Activated CD8-positive, alpha-beta memory T cell treated with anti-CD3 and anti-CD28 coated beads, Interleukin-2, amount 10 ng/mL, durations not matched to agents 7 days and 5 days (primary cell): ENCODE measurements at regions of chr10 and their contacts with region 1.

Region 1: DNA sequence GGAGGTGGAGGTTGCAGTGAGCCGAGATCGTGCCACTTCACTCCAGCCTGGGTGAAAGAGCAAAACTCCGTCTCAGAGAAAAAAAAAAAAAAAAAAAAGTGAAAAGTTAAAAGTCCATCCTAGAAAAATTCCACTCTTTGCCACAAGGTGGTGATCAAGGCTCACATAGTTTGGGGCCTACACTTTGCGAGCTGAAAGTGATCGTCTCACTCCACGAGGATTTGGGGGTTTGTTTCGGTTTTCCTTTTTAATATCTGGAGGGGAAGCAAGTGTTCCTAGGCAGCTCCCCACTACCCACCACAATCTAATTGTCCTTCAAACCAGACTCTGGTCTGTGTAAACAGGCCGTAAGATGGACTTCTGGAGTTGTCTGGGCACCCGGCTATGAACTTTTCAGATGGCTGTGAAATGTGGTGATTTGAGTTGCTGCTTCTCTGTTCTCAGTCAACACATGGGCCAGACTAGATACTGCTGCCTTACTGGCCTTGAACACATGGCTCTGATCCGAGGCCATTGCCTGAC is 27.1 kb downstream of the PRLHR start:
- DNase-seq: peak; percentile 61
- ATAC-seq: peak; percentile 60
- H3K4me3 Mint-ChIP-seq: no peak overlapping the region
- H3K27ac Mint-ChIP-seq: no peak overlapping the region
- H3K4me1 Mint-ChIP-seq: peaks cover 2% of the 10 kb centered on the region
- H3K27me3 Mint-ChIP-seq: peaks cover 7% of the 10 kb centered on the region

Region 2: DNA sequence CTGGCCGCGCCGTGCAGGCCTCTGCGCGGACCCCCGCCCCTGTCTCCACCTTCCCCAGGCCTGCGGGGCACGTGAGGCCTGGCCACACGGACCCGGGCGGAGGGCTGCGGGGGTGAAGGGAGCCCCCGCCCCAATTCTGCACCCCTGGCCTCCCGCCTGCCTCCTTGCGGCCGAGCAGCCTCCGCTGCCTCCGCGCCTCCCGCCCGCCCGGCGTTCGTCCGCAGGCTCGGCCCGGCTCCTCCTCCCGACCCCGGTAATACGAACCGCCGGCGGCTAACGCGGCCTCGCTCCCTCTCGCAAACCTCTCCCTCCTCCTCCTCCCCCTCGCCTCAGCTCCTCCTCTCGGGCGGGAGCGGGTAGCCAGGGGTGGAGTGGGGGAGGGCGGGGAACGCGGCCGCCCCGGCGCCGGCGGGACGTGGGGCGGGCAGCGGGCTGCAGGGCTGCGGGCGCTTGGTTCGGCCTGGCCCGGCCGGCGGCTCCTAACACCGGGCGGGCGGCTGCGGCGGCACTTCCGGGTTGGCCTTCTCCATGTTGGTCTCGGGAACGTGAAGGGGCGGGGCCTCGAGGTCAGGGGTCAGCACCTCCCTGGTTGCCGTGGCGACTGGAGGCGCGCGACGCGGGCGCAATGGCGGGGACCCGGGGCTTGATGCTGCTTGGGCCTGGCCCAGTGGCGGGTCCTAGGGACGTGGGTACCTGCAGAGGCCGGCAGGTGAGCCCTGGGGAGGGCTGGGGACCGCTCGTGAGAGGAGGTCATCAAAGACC is 521.8 kb before region 1 on chr10 and contains the start of gene RAB11FIP2:
- CTCF ChIA-PET with region 1: no interaction called
- DNase-seq: peak; percentile 96
- ATAC-seq: peak; percentile 92
- H3K4me3 Mint-ChIP-seq: peak within 1 kb of the TSS; percentile 83
- H3K27ac Mint-ChIP-seq: peak within 1 kb of the TSS; percentile 75
- H3K4me1 Mint-ChIP-seq: peaks cover 27% of the 10 kb centered on the region
- H3K27me3 Mint-ChIP-seq: no peaks in the 10 kb centered on the region
- total RNA-seq, gene RAB11FIP2: 12.8 to 16.9 TPM

Region 3: GRCh38 chr10:118383699-118384098 is 184.7 kb before region 1 on chr10:
- CTCF ChIA-PET with region 1: no interaction called
- DNase-seq: no peak
- ATAC-seq: no peak
- H3K4me3 Mint-ChIP-seq: no peak overlapping the region
- H3K27ac Mint-ChIP-seq: no peak overlapping the region
- H3K4me1 Mint-ChIP-seq: no peaks in the 10 kb centered on the region
- H3K27me3 Mint-ChIP-seq: peaks cover 27% of the 10 kb centered on the region

Region 4: DNA sequence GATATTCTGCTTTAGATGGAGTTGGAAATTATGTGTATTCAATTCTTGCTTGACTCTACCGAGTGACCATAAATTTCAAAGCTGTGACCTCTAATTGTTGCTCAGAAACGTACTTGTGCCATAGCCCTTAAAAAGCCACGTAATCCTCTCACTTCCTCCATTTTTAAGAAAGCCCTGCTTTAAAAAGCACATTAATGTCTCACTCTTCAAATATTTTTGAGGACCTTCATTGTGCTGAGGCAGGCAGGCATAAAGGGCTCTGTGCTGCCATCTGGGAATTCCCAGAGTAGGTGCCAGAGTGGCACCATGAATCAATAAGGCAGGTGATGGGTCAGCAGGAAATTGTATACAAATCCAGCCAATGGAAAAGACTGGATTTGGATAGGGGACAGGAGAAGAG is 128.6 kb before region 1 on chr10:
- CTCF ChIA-PET with region 1: no interaction called
- DNase-seq: no peak
- ATAC-seq: no peak
- H3K4me3 Mint-ChIP-seq: no peak overlapping the region
- H3K27ac Mint-ChIP-seq: no peak overlapping the region
- H3K4me1 Mint-ChIP-seq: no peaks in the 10 kb centered on the region
- H3K27me3 Mint-ChIP-seq: peaks cover 41% of the 10 kb centered on the region

Region 5: DNA sequence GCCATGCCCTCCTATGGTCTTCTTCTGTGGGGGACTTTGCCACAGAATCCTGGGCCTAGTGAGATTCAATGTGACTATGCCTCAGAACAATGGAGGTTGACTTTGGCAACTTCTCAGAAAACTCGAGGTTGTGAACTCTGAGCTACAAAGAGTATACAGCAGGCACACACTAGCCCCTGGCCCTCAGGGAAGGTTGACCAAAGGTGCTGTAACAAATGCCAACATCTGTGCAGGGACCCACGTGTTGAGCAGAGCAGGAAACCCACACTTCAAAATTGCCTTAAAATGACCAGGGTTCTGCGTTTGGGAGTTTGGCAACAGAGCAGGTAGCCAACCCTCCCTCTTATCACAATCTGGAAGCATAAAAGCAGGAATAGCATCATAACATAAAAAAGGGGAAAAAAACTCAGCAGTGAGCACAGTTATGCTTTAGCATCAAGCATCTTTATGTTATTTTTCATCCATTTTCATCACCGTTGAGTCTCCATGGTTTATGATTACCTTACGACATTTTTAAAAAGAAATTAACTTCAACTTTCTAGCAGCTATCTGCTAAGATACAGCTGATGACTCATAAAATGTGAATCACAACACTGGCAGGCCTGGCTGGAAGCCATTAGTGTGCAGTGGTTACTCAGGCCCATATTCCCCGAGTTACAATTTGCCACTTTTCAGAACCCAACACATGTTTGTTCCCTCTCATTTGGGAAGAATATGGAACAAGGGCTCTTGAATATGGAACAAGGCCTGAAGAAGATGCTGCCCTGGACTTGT is 16.0 kb after region 1 on chr10:
- CTCF ChIA-PET with region 1: interaction called, 16 read pairs
- DNase-seq: no peak
- ATAC-seq: no peak
- H3K4me3 Mint-ChIP-seq: no peak overlapping the region
- H3K27ac Mint-ChIP-seq: no peak overlapping the region
- H3K4me1 Mint-ChIP-seq: no peaks in the 10 kb centered on the region
- H3K27me3 Mint-ChIP-seq: peaks cover 2% of the 10 kb centered on the region

Region 6: DNA sequence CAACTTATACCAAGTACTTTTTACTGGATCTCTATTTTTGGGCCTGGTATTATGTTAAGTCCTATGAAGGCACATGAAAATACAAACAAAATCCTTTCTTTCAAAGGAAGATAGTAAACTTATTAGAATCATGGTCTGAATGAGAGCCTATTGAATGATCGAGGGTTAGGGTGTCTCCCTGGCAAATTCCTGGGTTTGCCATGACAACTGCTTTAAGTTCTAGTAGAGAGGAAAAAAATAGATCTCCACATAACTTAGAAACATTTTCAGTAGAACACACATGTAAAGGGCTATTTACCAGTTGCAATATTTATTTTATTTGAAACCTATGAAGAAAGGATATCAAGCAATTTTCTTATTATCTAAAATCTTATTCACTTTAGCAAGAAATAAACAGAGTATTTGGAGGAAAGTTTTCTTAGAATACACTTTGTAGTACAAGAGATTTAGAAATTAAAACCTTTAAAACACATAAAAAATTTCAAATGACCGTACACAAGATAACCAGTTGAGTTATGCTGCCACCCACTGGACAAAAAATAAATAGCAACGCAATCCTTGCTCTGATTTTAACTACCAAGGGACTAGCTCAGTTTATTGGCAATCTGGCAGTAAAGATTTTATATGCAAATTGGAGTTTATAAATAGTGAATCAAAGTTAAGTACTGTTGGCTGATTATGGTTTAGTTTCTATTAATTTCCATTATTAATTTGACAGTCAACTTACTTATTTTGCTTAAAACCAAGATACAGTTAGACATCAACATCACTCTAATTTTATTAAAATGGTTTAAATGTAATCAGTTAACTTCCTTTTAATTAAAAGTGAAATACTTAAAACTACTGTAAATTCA is 152.5 kb after region 1 on chr10:
- CTCF ChIA-PET with region 1: interaction called, 45 read pairs
- DNase-seq: peak; percentile 67
- ATAC-seq: no peak
- H3K4me3 Mint-ChIP-seq: no peak overlapping the region
- H3K27ac Mint-ChIP-seq: no peak overlapping the region
- H3K4me1 Mint-ChIP-seq: no peaks in the 10 kb centered on the region
- H3K27me3 Mint-ChIP-seq: no peaks in the 10 kb centered on the region